ENCODE measurements at regions of chr15 and their contacts with region 1.

Region 1: DNA sequence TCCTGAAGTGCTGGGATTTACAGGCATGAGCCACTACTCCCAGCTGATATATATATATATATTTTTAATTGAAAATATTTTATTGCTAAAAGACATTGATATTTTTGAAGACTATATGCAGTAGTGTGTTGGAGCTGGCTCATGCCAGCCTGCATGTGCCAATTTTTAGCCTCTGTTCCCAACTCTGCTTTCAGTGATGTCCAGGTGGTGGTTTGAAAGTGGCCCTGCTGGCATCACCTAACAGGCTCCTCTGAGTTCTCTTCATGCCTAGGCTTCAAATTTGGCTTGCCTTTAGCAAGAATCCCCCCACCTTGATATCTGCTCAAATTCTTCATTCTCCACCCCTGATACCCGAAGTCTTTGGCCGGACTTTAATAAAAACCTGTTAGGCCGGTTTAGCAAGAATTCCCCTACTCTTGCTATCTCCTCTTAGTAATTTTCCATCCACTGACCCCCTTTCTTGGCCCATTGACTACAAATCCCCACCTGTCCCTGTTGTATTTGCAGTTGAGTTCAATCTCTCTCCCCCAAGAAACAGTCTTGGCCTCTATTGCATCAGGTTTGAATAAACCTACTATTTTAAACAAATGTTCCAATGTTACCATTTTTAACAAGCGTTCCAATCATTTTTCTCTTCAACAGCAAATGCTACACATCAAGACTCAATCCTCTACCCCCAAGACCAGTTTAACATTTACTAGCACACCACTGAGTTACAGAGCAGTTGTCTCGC is 23.9 kb upstream of the CTSH start:
- DNase-seq: no peak
- ATAC-seq: no peak
- H3K4me3 ChIP-seq: no peak overlapping the region
- H3K27ac ChIP-seq: no peak overlapping the region
- H3K4me1 ChIP-seq: peaks cover 0 to 9% (median 0%) of the 10 kb centered on the region in 12 donors
- H3K27me3 ChIP-seq: no peaks in the 10 kb centered on the region
- CTCF ChIP-seq: no peak
- POLR2A ChIP-seq: no peak

Region 2: DNA sequence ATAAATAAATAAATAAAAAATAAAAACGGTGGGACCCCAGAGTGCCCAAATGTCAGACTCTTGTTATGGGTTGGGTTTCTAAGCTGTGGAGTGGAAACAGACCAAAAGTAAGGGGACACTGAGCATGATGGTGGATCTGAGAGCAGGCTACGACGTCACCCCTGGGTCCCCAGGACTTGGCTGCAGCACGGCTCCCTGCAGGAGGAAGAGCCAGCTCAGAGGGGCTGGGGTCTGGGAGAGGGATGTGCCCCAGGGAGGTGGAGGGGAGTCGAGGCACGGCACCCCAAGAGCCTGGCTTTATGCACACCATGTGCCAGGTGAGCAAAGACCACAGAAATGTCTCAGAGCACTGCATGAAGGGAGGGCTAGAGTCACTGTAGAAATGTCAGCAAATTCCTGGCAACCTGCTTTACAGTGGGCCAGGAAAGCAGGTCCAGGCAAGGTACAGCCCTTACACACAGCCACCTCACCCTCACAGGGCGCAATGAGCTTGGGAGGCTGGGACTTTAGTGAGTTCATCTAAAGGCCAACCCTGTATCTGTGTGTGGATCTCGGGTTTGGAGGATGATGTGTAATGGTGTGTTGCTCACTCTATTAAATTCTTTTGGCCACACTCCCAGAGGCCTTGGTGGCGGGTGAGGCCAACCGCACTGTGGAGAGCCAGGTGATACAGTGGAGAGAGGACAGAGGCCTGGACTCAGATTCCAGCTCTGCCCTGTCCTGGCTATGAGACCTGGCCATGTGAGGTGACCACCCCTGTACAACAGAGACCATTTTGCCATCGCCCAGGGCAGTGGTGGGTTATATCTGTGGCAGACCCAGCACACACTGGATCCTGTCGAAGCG is 37.9 kb before region 1 on chr15:
- intact Hi-C with region 1: no loop called
- DNase-seq: no peak
- ATAC-seq: peak in 3 of 4 donors; percentile 48 to 56 (median 56)
- H3K4me3 ChIP-seq: no peak overlapping the region
- H3K27ac ChIP-seq: peak overlapping the region in 3 of 12 donors; percentile 32 to 66 (median 42)
- H3K4me1 ChIP-seq: peaks cover 0 to 48% (median 24%) of the 10 kb centered on the region in 12 donors
- H3K27me3 ChIP-seq: no peaks in the 10 kb centered on the region
- CTCF ChIP-seq: no peak
- POLR2A ChIP-seq: no peak

Region 3: GRCh38 chr15:78950904-78951840 is 17.5 kb before region 1 on chr15:
- intact Hi-C with region 1: loop called in 1 of 10 experiments (anchors 2 kb)
- DNase-seq: no peak
- ATAC-seq: peak; percentile 34 to 69 (median 50)
- H3K4me3 ChIP-seq: no peak overlapping the region
- H3K27ac ChIP-seq: peak overlapping the region in 8 of 12 donors; percentile 17 to 61 (median 48)
- H3K4me1 ChIP-seq: peaks cover 0 to 26% (median 15%) of the 10 kb centered on the region in 12 donors
- H3K27me3 ChIP-seq: no peaks in the 10 kb centered on the region
- CTCF ChIP-seq: peak in 5 of 12 donors; percentile 10 to 32 (median 22)
- POLR2A ChIP-seq: no peak